Posterior cingulate gyrus (tissue), 11 donors: ENCODE measurements at regions of chr14 and their contacts with region 1.

Region 1: GRCh38 chr14:95150910-95151309 is 6.4 kb downstream of the DICER1 start:
- DNase-seq: no peak

Region 2: GRCh38 chr14:95098984-95099599 is 51.8 kb before region 1 on chr14:
- intact Hi-C with region 1: loop called (anchors 5 kb)
- DNase-seq: peak in 9 of 10 donors; percentile 36 to 95 (median 60)